ENCODE measurements at regions of chr17 and their contacts with region 1.

Region 1: GRCh38 chr17:32997753-32998632 is 6.3 kb downstream of the SPACA3 start:
- H3K4me3 ChIP-seq: peak overlapping the region; percentile 26
- H3K27ac ChIP-seq: no peak overlapping the region
- H3K4me1 ChIP-seq: no peaks in the 10 kb centered on the region
- CTCF ChIP-seq: peak; percentile 85

Region 2: GRCh38 chr17:32901743-32902142 is 96.2 kb before region 1 on chr17:
- CTCF ChIA-PET with region 1: no interaction called
- POLR2A ChIA-PET with region 1: no interaction called
- H3K4me3 ChIP-seq: no peak overlapping the region
- H3K27ac ChIP-seq: no peak overlapping the region
- H3K4me1 ChIP-seq: no peaks in the 10 kb centered on the region
- CTCF ChIP-seq: no peak

Region 3: GRCh38 chr17:32985050-32985756 is 12.8 kb before region 1 on chr17:
- CTCF ChIA-PET with region 1: interaction called, 19 read pairs
- POLR2A ChIA-PET with region 1: no interaction called
- H3K4me3 ChIP-seq: no peak overlapping the region
- H3K27ac ChIP-seq: no peak overlapping the region
- H3K4me1 ChIP-seq: no peaks in the 10 kb centered on the region
- CTCF ChIP-seq: no peak

Region 4: DNA sequence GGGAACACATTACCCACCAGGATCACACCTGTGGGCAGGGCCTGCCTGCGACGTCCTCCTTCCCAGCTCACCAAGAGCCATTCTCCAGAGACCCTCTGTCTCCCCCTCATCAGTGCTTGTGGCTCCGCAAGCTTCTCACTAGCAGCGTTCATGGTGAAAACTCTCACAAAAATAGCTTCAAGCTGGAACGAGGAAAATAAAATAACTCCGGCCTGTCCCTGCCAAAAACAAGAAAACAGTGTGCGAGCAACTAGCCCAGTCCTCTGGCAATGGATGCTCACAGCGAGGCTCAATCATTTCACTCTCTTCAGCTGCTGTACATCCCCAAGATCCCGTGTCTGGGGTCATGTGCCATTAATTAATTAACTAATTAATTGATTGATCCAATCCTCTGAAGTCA is 11.6 kb after region 1 on chr17:
- CTCF ChIA-PET with region 1: interaction called, 13 read pairs
- POLR2A ChIA-PET with region 1: no interaction called
- H3K4me3 ChIP-seq: no peak overlapping the region
- H3K27ac ChIP-seq: no peak overlapping the region
- H3K4me1 ChIP-seq: no peaks in the 10 kb centered on the region
- CTCF ChIP-seq: no peak

Measured in HEK293 (cell line).